ENCODE measurements at regions of chr5 and their contacts with region 1.

Region 1: GRCh38 chr5:149434162-149435014 is 55.3 kb upstream of the IL17B start:
- DNase-seq: peak; percentile 74
- CTCF ChIP-seq: peak; percentile 53

Region 2: GRCh38 chr5:148887123-148887881 is 547.1 kb before region 1 on chr5:
- CTCF ChIA-PET with region 1: no interaction called
- POLR2A ChIA-PET with region 1: no interaction called
- DNase-seq: no peak
- CTCF ChIP-seq: no peak

Region 3: GRCh38 chr5:149271716-149272563 is 162.4 kb before region 1 on chr5 and contains the start of gene AFAP1L1:
- CTCF ChIA-PET with region 1: no interaction called
- POLR2A ChIA-PET with region 1: no interaction called
- DNase-seq: no peak
- CTCF ChIP-seq: no peak

Region 4: GRCh38 chr5:149325166-149325735 is 109.1 kb before region 1 on chr5:
- CTCF ChIA-PET with region 1: interaction called, 10 read pairs
- POLR2A ChIA-PET with region 1: no interaction called
- DNase-seq: no peak
- CTCF ChIP-seq: no peak

Region 5: GRCh38 chr5:149341881-149342280 is 92.5 kb before region 1 on chr5:
- CTCF ChIA-PET with region 1: no interaction called
- POLR2A ChIA-PET with region 1: no interaction called
- DNase-seq: no peak
- CTCF ChIP-seq: no peak

Region 6: GRCh38 chr5:149387081-149387631 is 47.2 kb before region 1 on chr5:
- CTCF ChIA-PET with region 1: interaction called, 22 read pairs
- POLR2A ChIA-PET with region 1: no interaction called
- DNase-seq: no peak
- CTCF ChIP-seq: no peak

Region 7: DNA sequence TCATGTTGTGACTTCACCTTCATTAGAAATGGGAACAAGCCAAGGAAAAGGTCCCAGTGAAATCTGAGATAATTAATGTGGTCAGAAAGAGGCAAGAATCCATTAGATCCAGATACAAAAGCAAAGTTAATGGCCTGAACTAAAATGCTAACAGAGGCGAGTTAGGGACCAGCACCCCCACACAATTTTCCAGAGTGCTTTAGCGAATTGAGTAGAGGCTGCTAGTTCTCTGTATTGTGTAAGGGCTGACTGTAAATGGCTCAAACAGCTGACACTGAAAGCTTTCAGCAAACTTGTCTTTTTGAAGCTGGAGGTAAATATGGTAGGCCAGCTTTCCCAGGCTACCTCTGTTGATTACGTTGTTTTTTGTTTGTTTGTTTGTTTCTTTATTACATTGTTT is 41.4 kb after region 1 on chr5:
- CTCF ChIA-PET with region 1: interaction called, 12 read pairs
- POLR2A ChIA-PET with region 1: no interaction called
- DNase-seq: no peak
- CTCF ChIP-seq: no peak

Region 8: DNA sequence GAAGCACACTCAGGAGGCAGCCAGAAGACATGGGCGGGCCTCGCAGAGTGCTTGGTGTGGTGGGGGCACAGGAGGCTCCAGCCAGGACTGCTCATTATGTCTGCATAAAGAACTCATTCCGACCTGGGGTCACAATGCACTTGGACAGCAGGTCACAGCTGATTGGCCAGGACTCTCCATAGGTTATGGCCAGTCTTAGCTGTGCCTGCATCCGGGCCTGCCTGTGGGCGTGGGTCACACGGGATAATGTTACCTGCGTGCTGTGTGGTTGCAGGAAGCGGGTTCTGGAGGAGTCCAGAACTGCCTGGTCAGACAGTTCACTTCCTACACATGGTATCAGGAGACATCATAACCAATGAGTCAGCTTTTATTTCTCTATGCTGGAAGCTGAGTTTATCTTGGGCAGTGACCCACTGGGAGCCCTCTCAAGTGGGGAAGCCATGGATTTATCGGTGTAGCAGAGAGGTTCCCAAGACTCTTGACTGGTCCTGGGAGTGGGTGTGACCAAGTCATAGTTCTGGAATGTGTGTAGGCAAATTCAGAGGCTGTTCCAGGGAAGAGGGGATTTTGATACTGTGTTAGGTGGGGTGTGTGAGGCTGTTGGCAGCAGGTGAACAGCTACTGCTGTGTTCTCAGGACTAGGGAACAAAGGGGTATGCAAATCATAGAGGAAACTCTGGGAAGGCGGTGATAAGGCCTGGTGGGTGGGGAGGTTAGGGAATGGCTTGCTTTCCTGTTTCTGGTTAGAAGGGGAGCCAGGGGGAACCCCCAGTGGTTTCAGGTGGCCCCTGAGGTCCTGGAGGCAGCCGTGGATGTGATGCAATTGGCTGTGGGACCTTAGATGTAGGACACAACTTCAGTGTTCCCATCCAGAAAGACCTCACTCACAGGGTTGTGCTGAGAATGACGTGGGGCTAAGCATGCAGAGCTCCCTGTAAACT is 198.2 kb after region 1 on chr5:
- CTCF ChIA-PET with region 1: no interaction called
- POLR2A ChIA-PET with region 1: no interaction called
- DNase-seq: no peak
- CTCF ChIP-seq: no peak

Measured in GM10248 (cell line).